Prostate gland (tissue), 2 donors: ENCODE measurements at regions of chr2 and their contacts with region 1.

Region 1: GRCh38 chr2:12456293-12457151 is 260.2 kb upstream of the TRIB2 start:
- DNase-seq: peak; percentile 88
- H3K4me3 ChIP-seq: no peak overlapping the region
- H3K27ac ChIP-seq: peak overlapping the region; percentile 51 to 56
- H3K4me1 ChIP-seq: no peaks in the 10 kb centered on the region
- H3K27me3 ChIP-seq: no peaks in the 10 kb centered on the region
- CTCF ChIP-seq: no peak
- POLR2A ChIP-seq: no peak

Region 2: DNA sequence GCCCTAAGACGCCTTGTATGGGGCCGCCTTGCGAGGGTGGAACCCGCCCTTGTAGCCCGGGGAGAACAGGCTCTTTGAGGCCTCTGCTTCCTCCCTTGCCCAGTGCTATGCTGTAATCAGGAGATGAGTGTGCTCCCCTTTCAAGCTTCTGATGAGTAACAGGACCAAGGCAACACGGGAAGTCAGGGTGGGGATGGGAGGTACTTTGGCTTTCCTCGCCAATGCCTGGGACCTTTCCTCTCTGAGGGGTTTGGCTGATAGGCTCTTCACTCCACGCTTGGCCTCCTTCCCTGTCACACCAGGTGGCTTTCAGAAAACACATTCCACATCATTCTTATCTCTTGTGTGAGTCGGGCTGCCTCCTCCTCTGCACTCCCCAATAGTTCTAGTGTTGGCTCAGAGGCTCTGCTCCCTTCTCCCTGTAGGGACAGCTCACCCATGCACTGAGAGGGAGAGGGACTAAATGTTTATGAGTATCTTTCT is 36.5 kb after region 1 on chr2:
- intact Hi-C with region 1: no loop called
- DNase-seq: no peak
- H3K4me3 ChIP-seq: no peak overlapping the region
- H3K27ac ChIP-seq: no peak overlapping the region
- H3K4me1 ChIP-seq: no peaks in the 10 kb centered on the region
- H3K27me3 ChIP-seq: no peaks in the 10 kb centered on the region
- CTCF ChIP-seq: no peak
- POLR2A ChIP-seq: no peak

Region 3: DNA sequence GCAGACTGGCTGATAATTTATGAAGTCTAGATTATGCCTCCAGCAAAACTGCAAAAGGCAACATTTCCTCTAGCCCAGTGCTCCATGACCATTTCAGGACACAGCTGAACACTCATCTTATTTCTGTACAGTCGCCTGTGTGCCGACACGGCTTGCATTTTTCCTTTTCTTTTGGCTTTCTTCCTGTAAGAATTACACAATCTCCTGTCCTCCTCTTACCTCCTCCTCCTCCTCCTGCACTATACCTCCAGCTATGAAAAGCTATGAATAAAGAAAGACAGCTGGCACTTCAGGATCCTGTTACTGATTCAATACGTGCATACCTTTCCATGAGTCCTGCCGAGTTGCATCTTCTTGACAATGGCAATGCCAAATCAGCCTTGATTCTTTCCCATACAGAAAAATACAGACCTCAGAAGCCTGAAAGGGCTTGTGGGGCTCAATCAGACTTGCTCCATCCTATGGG is 228.0 kb after region 1 on chr2:
- intact Hi-C with region 1: loop called (anchors 10 kb)
- DNase-seq: peak; percentile 42
- H3K4me3 ChIP-seq: no peak overlapping the region
- H3K27ac ChIP-seq: peak overlapping the region in 1 of 2 donors; percentile 29
- H3K4me1 ChIP-seq: peaks cover 8% of the 10 kb centered on the region
- H3K27me3 ChIP-seq: no peaks in the 10 kb centered on the region
- CTCF ChIP-seq: no peak
- POLR2A ChIP-seq: no peak